ENCODE measurements at regions of chr12 and their contacts with region 1.

Region 1: GRCh38 chr12:111330800-111331752 is 37.8 kb downstream of the PHETA1 start:
- DNase-seq: peak; percentile 33
- H3K4me3 Mint-ChIP-seq: no peak overlapping the region
- H3K27ac Mint-ChIP-seq: no peak overlapping the region
- H3K4me1 Mint-ChIP-seq: no peaks in the 10 kb centered on the region
- H3K27me3 Mint-ChIP-seq: peaks cover 51% of the 10 kb centered on the region
- CTCF ChIP-seq: peak; percentile 55

Region 2: GRCh38 chr12:111352296-111352993 is 21.4 kb after region 1 on chr12:
- CTCF ChIA-PET with region 1: interaction called, 10 read pairs
- intact Hi-C with region 1: no loop called
- DNase-seq: no peak
- H3K4me3 Mint-ChIP-seq: no peak overlapping the region
- H3K27ac Mint-ChIP-seq: no peak overlapping the region
- H3K4me1 Mint-ChIP-seq: no peaks in the 10 kb centered on the region
- H3K27me3 Mint-ChIP-seq: peaks cover 14% of the 10 kb centered on the region
- CTCF ChIP-seq: no peak

Region 3: DNA sequence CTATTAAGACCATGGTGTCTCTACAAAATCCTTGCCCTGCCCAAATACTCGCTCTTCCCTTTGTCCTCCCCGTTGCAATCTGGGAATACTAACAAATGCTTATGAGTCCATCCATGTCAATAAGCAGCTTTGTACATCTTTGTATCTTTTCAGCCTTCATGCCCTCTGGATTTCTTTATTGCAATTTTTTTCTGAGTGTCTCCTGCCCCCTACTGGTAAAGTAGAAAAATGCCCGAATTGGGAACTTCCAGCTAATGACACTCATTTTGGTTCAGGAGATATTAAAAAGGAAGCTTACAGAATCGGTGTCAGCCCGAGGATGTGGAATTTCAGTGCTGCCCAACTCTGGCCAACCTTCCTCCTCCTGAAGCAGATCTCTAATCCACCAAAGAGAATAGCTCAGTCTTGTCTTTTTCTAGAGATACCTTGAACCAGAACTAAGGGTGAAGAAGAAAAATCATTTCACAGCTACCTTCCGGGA is 120.6 kb after region 1 on chr12:
- CTCF ChIA-PET with region 1: interaction called, 16 read pairs
- intact Hi-C with region 1: loop called (anchors 1 kb)
- DNase-seq: peak; percentile 34
- H3K4me3 Mint-ChIP-seq: no peak overlapping the region
- H3K27ac Mint-ChIP-seq: no peak overlapping the region
- H3K4me1 Mint-ChIP-seq: no peaks in the 10 kb centered on the region
- H3K27me3 Mint-ChIP-seq: no peaks in the 10 kb centered on the region
- CTCF ChIP-seq: peak; percentile 67

Region 4: DNA sequence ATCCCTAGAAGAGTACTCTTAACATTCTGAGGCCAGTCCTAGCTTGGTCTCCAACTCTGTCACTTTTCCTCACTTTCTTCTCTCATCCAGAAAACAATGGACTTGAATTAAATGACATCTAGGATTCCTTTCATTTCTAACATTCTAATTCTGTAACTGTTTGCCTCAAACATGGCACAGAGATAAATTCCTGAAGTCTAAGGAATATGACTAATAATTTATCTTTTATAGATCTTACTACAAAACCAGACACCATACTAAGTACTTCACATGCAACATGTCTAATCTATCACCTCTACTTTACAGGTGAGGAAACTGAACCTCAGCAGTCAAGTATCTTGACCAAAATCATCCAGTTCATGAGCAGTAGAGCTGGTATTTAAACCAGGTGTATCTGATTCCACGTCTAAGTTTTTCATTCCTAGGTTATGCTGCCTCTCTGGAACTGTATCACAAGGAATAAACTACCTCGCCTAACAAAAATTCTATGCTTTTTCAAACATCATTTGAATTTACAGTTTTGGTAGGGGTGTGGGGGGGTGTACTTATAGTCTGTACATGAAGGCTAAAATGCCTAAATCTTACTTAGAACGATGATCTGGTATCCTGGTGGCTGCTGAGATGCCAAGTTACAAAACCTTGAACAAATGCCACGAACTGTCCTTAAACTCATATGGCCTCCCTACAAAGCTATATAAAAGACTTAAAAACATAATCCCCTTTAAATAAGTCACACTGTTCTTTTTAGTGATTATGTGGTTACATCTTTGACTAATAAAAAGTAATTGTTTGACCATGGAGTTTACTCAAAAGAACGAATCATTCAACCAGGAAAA is 226.4 kb after region 1 on chr12:
- CTCF ChIA-PET with region 1: no interaction called
- intact Hi-C with region 1: no loop called
- DNase-seq: no peak
- H3K4me3 Mint-ChIP-seq: no peak overlapping the region
- H3K27ac Mint-ChIP-seq: no peak overlapping the region
- H3K4me1 Mint-ChIP-seq: peaks cover 27% of the 10 kb centered on the region
- H3K27me3 Mint-ChIP-seq: no peaks in the 10 kb centered on the region
- CTCF ChIP-seq: no peak

Region 5: DNA sequence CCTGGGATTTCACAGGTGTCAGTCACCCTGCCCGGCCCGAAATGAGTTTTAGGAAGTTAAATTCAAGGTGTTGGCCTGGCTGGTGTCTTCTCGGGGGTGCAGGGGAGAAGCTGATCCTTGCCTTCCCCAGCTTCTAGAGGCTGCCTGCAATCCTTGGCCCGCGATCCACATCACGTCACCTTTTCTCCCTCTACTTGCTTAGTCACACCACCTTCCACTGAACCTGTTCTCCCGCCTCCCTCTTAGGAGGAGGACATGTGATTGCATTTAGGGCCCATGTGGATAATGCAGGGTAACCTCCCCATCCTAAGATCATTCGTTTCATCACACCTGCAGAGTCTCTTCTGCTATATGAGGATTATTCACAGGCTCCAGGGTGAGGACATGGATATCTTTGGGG is 293.5 kb after region 1 on chr12:
- CTCF ChIA-PET with region 1: no interaction called
- intact Hi-C with region 1: no loop called
- DNase-seq: peak; percentile 74
- H3K4me3 Mint-ChIP-seq: peak overlapping the region; percentile 20
- H3K27ac Mint-ChIP-seq: peak overlapping the region; percentile 17
- H3K4me1 Mint-ChIP-seq: peaks cover 21% of the 10 kb centered on the region
- H3K27me3 Mint-ChIP-seq: no peaks in the 10 kb centered on the region
- CTCF ChIP-seq: no peak